Thyroid gland (tissue), 4 donors: ENCODE measurements at regions of chr1 and their contacts with region 1.

Region 1: GRCh38 chr1:151156515-151156819 is at the start of gene TNFAIP8L2:
- DNase-seq: no peak
- H3K4me3 ChIP-seq: no peak within 1 kb of the TSS
- H3K27ac ChIP-seq: no peak within 1 kb of the TSS
- H3K4me1 ChIP-seq: no peaks in the 10 kb centered on the region
- H3K27me3 ChIP-seq: no peaks in the 10 kb centered on the region
- CTCF ChIP-seq: no peak
- POLR2A ChIP-seq: no peak
- total RNA-seq, gene TNFAIP8L2: 2.2 to 4.2 (median 2.4) TPM

Region 2: DNA sequence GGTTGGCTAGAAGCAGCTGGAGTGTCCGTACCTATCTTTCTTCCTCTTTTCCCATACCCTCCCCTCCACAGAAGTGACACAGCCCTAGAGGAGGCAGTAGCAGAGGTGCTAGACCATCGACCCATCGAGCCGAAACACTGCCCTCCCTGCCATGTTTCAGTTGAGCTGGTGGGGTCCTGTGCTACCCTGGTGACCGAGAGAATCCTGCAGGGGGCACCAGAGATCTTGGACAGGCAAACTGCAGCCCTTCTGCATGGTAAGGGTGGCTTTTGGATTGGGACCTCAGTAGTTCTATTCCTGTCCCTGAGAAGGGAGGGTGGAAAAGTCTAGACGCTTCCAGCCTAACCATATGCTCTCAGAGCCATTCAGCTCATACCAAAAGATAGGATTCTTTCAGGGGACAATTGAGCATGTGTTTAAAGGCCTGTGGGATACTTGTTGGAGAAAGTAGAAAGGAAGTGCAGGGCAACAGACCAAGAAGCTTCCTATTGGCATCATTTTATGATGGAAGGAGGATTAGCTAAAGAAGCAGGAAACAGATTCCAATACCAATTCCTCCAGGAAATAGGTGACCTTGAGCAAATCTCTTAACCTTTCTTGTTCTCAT is 131.8 kb before region 1 on chr1:
- intact Hi-C with region 1: loop called (anchors 10 kb)
- DNase-seq: peak; percentile 81 to 84
- H3K4me3 ChIP-seq: no peak overlapping the region
- H3K27ac ChIP-seq: peak overlapping the region; percentile 3 to 80 (median 20)
- H3K4me1 ChIP-seq: peaks cover 10 to 29% of the 10 kb centered on the region in 2 donors
- H3K27me3 ChIP-seq: no peaks in the 10 kb centered on the region
- CTCF ChIP-seq: peak in 5 of 6 experiments; percentile 59 to 74 (median 67)
- POLR2A ChIP-seq: no peak

Region 3: DNA sequence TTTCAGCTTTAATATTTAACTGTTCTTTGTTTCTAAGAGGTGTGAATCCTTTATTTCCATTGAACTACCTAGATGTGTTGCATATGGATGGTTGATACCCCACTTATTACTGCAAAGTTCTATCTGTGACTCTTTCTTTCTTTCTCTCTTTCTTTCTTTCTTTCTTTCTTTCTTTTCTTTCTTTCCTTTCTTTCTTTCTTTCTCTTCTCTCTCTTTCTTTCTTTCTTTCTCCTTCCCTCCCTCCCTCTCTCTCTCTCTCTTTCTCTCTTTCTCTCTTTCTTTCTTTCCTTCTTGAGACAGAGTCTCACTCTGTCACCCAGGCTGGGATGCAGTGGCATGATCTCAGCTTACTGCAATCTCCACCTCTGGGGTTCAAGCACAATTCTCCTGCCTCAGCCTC is 51.8 kb before region 1 on chr1:
- intact Hi-C with region 1: loop called (anchors 5 kb)
- DNase-seq: no peak
- H3K4me3 ChIP-seq: no peak overlapping the region
- H3K27ac ChIP-seq: no peak overlapping the region
- H3K4me1 ChIP-seq: no peaks in the 10 kb centered on the region
- H3K27me3 ChIP-seq: no peaks in the 10 kb centered on the region
- CTCF ChIP-seq: no peak
- POLR2A ChIP-seq: no peak

Region 4: GRCh38 chr1:151210830-151211229 is 54.4 kb after region 1 on chr1:
- intact Hi-C with region 1: no loop called
- DNase-seq: no peak
- H3K4me3 ChIP-seq: no peak overlapping the region
- H3K27ac ChIP-seq: no peak overlapping the region
- H3K4me1 ChIP-seq: peaks cover 9 to 12% of the 10 kb centered on the region in 2 donors
- H3K27me3 ChIP-seq: no peaks in the 10 kb centered on the region
- CTCF ChIP-seq: no peak
- POLR2A ChIP-seq: no peak

Region 5: GRCh38 chr1:152495066-152495675 is 1338.7 kb after region 1 on chr1:
- intact Hi-C with region 1: no loop called
- DNase-seq: no peak
- H3K4me3 ChIP-seq: no peak overlapping the region
- H3K27ac ChIP-seq: no peak overlapping the region
- H3K4me1 ChIP-seq: no peaks in the 10 kb centered on the region
- H3K27me3 ChIP-seq: no peaks in the 10 kb centered on the region
- CTCF ChIP-seq: no peak
- POLR2A ChIP-seq: no peak